ENCODE measurements at regions of chr14 and their contacts with region 1.

Region 1: DNA sequence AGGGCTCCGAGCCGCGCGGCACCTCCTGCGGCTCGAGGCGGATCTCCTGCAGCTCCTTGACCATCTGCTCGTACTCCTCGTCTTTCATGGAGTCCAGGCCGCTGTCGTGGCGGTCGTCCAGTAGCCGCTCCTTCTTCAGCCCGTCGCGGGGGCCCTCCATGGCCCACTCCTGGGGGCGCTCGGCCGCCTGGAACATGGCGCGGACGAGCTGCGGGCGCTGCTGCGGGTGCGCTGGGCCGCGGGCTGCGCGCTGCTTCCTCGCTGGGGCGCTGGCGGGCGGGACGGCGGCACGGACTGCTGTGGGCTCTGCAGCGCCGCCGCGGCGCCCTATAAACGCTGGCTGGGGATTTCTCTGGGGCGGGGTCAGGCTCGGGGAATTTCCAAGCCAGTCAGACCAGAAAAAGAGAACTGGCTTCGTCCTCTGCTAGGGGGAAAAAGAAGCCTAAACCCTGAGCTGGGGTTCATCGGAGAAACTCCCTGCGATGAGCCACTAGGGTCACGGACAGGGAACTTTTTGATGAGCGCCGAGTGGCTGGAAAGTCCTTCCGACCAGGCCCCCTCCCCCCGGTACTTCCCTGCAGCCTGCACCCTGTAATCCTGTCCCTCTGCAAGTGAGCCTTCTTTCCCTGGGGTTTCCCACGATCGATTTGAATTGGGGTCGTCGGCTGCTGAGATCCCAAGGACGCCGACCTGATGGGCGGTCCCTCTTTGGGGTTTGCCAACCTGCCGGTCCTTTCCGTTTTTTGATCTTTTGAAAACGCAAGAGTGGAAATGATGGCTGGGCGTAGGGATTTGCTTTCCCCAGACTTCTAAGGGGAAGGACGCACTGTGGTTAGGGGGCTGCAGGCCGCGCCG is at the start of gene NFKBIA:
- DNase-seq: no peak
- ATAC-seq: peak; percentile 81
- H3K4me3 ChIP-seq: peak within 1 kb of the TSS; percentile 68 to 73
- H3K27ac ChIP-seq: peak within 1 kb of the TSS; percentile 97
- H3K4me1 ChIP-seq: peaks cover 43% of the 10 kb centered on the region
- H3K27me3 ChIP-seq: no peaks in the 10 kb centered on the region
- CTCF ChIP-seq: no peak; the same call in 1 of the 2 replicates
- total RNA-seq, gene NFKBIA: 99.4 TPM

Region 2: GRCh38 chr14:35215110-35215876 is 189.4 kb before region 1 on chr14:
- CTCF ChIA-PET with region 1: interaction called, 4 read pairs
- POLR2A ChIA-PET with region 1: no interaction called
- in situ Hi-C with region 1: no loop called
- intact Hi-C with region 1: loop called (anchors 10 kb)
- DNase-seq: no peak
- ATAC-seq: no peak
- H3K4me3 ChIP-seq: no peak overlapping the region
- H3K27ac ChIP-seq: no peak overlapping the region
- H3K4me1 ChIP-seq: peaks cover 4% of the 10 kb centered on the region; the same call in 1 of the 2 replicates
- H3K27me3 ChIP-seq: no peaks in the 10 kb centered on the region
- CTCF ChIP-seq: peak; percentile 51; the same call in 1 of the 2 replicates

Region 3: GRCh38 chr14:35341446-35342159 is 63.1 kb before region 1 on chr14:
- CTCF ChIA-PET with region 1: no interaction called
- POLR2A ChIA-PET with region 1: no interaction called
- in situ Hi-C with region 1: no loop called
- intact Hi-C with region 1: loop called (anchors 5 kb)
- DNase-seq: no peak
- ATAC-seq: peak; percentile 95
- H3K4me3 ChIP-seq: peak overlapping the region in 1 of 2 experiments; percentile 16; a peak in 1 of 4 replicates
- H3K27ac ChIP-seq: peak overlapping the region; percentile 84
- H3K4me1 ChIP-seq: peaks cover 42% of the 10 kb centered on the region
- H3K27me3 ChIP-seq: no peaks in the 10 kb centered on the region
- CTCF ChIP-seq: no peak

Region 4: DNA sequence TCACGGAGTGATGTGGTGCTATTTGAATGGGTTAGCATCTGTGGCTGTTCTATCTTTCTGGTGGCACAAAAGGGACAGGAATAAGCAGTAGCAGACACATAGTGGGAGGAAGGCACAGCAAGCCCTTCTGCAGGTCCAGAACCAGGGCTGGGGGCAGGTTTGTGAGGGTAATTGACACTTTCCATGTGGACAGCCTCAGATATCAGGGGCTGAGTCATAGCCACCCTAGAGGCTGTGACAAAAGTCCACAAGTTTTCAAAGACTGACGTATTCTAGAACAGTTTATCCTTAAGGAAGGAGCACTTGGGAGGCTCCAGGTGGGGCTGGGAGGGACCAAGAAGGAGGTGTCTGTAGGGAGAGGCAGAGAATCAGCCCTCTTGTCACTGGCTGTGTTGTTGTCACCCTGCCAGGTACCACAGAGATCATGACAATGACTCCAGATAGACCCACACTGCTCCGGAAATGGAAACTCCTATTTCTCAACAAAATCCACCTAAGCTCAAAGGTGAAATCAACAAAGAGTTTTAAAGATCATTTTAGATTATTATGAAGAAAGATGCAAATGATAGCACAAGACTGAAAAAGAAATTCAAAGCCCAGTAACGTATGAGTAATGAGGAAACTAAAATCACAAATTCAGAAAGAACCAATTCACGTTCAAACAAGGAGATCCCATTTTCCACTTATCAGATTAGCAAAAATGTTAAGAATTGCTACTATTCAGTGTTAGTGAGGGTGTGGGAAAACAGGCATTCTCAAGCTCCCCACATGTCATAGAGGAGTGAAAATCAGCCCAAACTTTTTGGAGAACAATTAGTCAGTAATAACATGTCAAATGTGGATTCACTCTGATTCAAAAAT is 48.5 kb before region 1 on chr14:
- CTCF ChIA-PET with region 1: interaction called, 7 read pairs
- POLR2A ChIA-PET with region 1: interaction called, 13 read pairs
- in situ Hi-C with region 1: no loop called
- intact Hi-C with region 1: no loop called
- DNase-seq: no peak
- ATAC-seq: peak; percentile 27
- H3K4me3 ChIP-seq: no peak overlapping the region
- H3K27ac ChIP-seq: peak overlapping the region; percentile 45; the same call in 1 of the 2 replicates
- H3K4me1 ChIP-seq: peaks cover 23% of the 10 kb centered on the region
- H3K27me3 ChIP-seq: no peaks in the 10 kb centered on the region
- CTCF ChIP-seq: no peak